ENCODE measurements at regions of chr13 and their contacts with region 1.

Region 1: GRCh38 chr13:98466634-98467236 is 110.2 kb downstream of the STK24 start:
- DNase-seq: no peak
- CTCF ChIP-seq: peak; percentile 48

Region 2: DNA sequence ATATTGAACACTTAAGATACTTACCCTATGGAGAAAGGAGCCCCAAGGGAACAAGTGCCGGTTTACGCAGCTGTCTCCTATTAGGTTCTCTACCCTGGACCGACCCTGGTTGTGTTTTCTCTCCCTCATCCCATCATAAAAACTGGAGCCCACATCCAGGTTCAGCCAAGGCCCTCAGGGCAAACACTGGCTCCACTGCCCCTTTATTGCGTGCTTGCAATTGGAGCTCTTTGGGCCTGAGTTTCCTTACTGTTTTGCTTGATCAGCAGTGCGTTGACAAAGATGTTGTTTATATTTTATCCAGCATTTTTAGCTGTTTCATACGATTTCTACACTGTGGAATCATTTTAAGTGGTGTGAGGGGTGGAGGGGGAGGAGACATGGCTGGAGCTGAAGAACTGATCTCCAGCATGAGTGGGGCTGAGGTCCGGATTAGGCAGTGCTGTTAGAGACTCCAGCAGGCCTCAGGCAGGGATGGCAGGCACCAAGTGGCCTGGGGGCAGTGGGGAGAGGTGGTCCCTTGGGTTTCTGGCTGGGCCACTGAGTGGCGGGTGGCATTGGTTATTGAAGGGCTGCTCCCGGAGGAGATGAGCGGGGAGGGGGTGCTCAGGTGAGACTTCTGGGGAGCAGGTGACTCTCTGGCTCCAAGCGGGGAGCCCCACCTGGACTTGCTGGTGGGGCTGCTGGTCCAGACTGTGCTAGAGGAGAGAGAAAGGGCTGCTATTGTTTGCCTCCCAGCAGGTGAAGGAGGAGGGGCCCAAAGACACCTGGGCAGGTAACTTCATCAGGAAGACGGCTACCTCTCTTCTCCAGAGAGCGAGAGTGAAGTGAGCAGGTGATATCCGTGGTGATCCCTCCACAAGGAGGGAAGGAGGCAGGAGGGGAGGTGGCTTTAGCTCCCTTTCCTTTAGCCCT is 227.3 kb before region 1 on chr13:
- CTCF ChIA-PET with region 1: no interaction called
- POLR2A ChIA-PET with region 1: no interaction called
- DNase-seq: no peak
- CTCF ChIP-seq: no peak

Region 3: GRCh38 chr13:98454389-98454881 is 12.3 kb before region 1 on chr13:
- CTCF ChIA-PET with region 1: interaction called, 16 read pairs
- POLR2A ChIA-PET with region 1: no interaction called
- DNase-seq: no peak
- CTCF ChIP-seq: no peak

Measured in GM10248 (cell line).